AG04450 (cell line): ENCODE measurements at regions of chr9 and their contacts with region 1.

Region 1: DNA sequence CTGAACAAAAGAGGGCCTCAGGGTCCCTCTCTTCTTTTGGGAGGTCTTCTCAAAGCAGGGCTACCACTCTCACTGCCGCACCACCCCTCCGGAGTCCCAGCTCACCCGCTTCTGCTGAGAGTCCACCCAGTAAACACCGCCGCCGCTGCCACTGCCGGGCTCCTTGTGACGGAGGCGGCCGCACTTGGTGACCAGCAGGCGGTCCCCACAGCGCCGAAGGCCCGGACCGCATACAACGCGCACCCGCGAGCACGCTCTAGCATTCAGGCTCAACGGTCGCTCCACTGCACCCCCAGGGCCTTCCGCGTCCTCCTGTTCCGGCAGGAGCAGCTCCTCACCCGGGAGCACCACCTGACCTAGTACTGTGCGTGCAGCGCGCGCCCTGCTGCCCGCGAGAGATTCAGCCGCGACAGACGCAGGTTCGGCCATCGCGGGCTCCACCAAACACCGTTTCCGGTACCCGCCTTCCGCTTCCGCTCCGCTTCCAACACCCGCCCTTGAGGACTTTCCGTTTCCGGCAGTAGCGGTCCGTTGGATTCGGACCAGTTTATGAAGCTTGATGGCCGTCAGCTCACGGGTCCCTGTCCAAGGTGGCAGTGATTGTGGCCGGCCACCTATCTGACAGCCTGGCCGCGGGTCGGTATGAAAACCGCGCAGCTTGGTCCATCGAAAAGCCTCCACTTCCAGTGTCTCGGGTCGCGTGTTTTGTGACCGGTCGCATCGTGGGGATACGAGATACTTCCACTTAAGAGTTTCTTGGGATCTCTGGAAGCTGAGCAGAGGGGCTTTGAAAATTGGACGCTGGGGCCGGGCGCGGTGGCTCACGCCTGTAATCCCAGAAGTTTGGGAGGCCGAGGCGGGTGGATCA is at the start of gene EXOSC3:
- DNase-seq: peak; percentile 61
- H3K4me3 ChIP-seq: peak within 1 kb of the TSS; percentile 94
- H3K27ac ChIP-seq: peak within 1 kb of the TSS; percentile 42
- H3K27me3 ChIP-seq: no peaks in the 10 kb centered on the region
- CTCF ChIP-seq: peak; percentile 14; the same call in 1 of the 2 replicates
- polyA plus RNA-seq, gene EXOSC3: 19.9 and 29.1 TPM in 2 replicates

Region 2: GRCh38 chr9:37449862-37450632 is 334.8 kb before region 1 on chr9:
- CTCF ChIA-PET with region 1: no interaction called
- POLR2A ChIA-PET with region 1: no interaction called
- DNase-seq: no peak
- H3K4me3 ChIP-seq: no peak overlapping the region
- H3K27ac ChIP-seq: no peak overlapping the region
- H3K27me3 ChIP-seq: no peaks in the 10 kb centered on the region
- CTCF ChIP-seq: no peak

Region 3: GRCh38 chr9:37503736-37504135 is 281.1 kb before region 1 on chr9:
- CTCF ChIA-PET with region 1: no interaction called
- POLR2A ChIA-PET with region 1: no interaction called
- DNase-seq: no peak
- H3K4me3 ChIP-seq: no peak overlapping the region
- H3K27ac ChIP-seq: no peak overlapping the region
- H3K27me3 ChIP-seq: no peaks in the 10 kb centered on the region
- CTCF ChIP-seq: no peak

Region 4: GRCh38 chr9:37800631-37801286 is 15.9 kb after region 1 on chr9 and contains the start of gene DCAF10:
- CTCF ChIA-PET with region 1: interaction called, 3 read pairs
- POLR2A ChIA-PET with region 1: interaction called, 26 read pairs
- DNase-seq: peak; percentile 50
- H3K4me3 ChIP-seq: peak within 1 kb of the TSS; percentile 98
- H3K27ac ChIP-seq: peak within 1 kb of the TSS; percentile 65
- H3K27me3 ChIP-seq: no peaks in the 10 kb centered on the region
- CTCF ChIP-seq: peak; percentile 10; the same call in 1 of the 2 replicates
- polyA plus RNA-seq, gene DCAF10: 26.4 and 28.7 TPM in 2 replicates

Region 5: DNA sequence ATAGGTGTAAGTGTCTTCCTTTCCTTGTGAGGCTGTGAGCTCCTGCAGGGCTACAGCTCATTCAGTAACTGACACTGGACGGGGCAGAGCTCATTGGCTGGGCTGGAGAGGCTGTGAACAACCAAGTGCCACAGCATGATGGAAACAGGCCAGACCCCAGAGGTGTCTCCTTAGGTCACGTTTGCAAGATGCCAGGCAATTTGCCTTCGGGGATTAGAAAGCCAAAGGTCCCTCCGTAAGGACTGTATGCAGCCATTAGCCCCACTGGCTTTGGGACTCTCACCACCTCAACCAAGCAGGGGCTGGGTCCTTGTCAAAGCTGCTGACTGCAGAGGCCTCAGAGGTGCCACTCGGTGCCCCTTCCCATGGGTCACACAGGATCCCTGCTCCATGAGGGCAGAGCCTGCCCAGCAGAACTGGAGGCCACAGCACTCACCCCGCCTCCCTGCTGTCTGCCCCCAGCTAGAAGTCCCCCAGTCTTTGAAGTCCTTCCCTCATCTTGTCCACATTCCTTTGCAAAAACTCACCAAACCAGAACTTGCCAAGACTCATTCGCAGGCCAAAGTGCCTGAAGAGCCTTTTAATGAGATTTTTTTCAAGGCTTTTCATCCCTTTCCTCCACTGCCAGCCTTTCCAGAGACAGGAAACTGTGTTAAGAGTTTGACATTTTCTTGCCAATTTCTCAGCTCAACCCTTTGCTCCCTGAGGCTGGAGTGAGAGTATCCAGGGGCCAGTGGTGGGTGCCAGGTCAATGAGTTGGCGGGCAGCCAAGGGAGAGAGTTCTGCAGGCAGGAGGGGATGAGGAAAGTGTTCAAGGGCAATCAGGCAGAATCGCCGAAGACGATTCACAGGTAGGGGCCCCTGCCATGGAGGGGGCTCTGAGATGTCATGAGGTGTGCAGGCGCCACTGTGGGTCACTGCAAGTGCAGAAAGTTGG is 158.7 kb after region 1 on chr9:
- CTCF ChIA-PET with region 1: no interaction called
- POLR2A ChIA-PET with region 1: no interaction called
- DNase-seq: peak; percentile 71
- H3K4me3 ChIP-seq: no peak overlapping the region
- H3K27ac ChIP-seq: peak overlapping the region; percentile 73
- H3K27me3 ChIP-seq: no peaks in the 10 kb centered on the region
- CTCF ChIP-seq: no peak